ENCODE measurements at regions of chr1 and their contacts with region 1.

Region 1: GRCh38 chr1:84781946-84782771 is 91.9 kb upstream of the SSX2IP start:
- DNase-seq: peak; percentile 88
- H3K4me3 Mint-ChIP-seq: peak overlapping the region; percentile 67
- H3K27ac Mint-ChIP-seq: no peak overlapping the region
- H3K4me1 Mint-ChIP-seq: peaks cover 17% of the 10 kb centered on the region
- H3K27me3 Mint-ChIP-seq: no peaks in the 10 kb centered on the region

Region 2: GRCh38 chr1:84795966-84796600 is 13.9 kb after region 1 on chr1:
- CTCF ChIA-PET with region 1: interaction called, 17 read pairs
- POLR2A ChIA-PET with region 1: no interaction called
- intact Hi-C with region 1: no loop called
- DNase-seq: no peak
- H3K4me3 Mint-ChIP-seq: no peak overlapping the region
- H3K27ac Mint-ChIP-seq: no peak overlapping the region
- H3K4me1 Mint-ChIP-seq: no peaks in the 10 kb centered on the region
- H3K27me3 Mint-ChIP-seq: no peaks in the 10 kb centered on the region

Region 3: DNA sequence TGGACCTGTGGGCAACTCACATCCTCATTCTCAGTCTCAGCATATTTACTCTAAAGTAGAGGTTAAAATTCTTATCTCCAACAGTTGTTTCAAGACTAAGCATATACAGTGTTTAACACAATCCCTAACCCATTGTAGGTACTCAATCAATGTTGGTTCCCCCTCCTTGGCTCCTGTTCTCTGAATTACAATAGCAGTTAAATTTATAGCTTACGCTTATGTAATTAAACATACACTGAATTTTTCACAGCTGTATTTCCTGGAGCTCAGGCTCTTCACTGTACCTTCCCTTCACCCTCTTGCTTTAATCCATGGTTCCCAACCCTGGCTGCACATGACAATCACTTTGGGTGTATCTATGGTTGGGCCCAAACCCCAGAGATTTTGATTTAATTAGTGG is 21.4 kb after region 1 on chr1:
- CTCF ChIA-PET with region 1: interaction called, 14 read pairs
- POLR2A ChIA-PET with region 1: no interaction called
- intact Hi-C with region 1: no loop called
- DNase-seq: no peak
- H3K4me3 Mint-ChIP-seq: no peak overlapping the region
- H3K27ac Mint-ChIP-seq: no peak overlapping the region
- H3K4me1 Mint-ChIP-seq: no peaks in the 10 kb centered on the region
- H3K27me3 Mint-ChIP-seq: peaks cover 1% of the 10 kb centered on the region

Region 4: GRCh38 chr1:84862810-84863251 is 80.7 kb after region 1 on chr1:
- CTCF ChIA-PET with region 1: no interaction called
- POLR2A ChIA-PET with region 1: no interaction called
- intact Hi-C with region 1: loop called (anchors 5 kb)
- DNase-seq: peak; percentile 65
- H3K4me3 Mint-ChIP-seq: peak overlapping the region; percentile 7
- H3K27ac Mint-ChIP-seq: peak overlapping the region; percentile 43
- H3K4me1 Mint-ChIP-seq: peaks cover 28% of the 10 kb centered on the region
- H3K27me3 Mint-ChIP-seq: no peaks in the 10 kb centered on the region

Region 5: DNA sequence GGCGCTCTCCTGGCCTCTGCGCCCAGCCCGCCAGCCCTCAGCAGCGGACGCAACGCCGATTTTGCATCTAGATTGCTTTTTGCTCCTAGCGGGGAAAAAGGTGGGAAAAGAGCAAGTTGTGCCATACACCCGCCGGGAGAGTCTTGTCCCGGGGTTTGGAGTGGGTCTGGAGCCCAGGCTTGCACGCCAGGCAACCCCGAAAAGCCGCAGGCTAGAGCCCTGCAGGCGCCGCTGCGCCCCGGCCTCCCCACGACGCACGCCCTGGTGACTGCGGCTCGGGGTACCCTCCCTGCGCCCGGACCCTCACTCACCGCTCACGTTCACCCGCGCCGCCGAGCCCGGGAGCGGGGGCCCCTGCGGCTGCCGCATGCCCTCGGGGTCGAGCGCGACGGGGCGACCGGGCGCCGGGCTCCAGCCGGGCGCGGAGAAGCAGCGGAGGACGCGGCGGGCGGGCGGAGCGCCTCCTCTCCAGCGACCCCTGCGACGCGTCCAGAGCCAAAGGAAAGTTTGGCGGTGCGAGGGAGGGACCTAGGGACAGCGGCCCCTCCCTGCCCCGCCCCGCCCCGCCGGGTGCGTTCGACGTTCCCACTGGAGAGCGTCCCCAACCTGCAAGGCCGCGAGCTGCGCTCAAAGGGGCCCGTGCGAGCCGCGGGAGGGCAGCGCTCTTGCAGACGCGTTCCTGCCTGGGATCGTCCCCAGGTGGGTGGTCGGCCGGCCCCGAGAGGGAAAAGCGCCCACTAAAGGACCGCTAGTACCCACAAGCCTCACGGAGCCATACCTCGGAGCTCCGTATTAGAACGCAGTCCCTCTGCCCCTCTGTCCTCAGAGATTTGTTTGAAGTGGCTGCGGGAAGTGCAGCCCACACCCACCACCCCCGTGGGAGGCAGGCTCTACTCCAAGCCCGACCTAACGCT is 110.8 kb after region 1 on chr1 and contains the start of gene LPAR3:
- CTCF ChIA-PET with region 1: interaction called, 4 read pairs
- POLR2A ChIA-PET with region 1: no interaction called
- intact Hi-C with region 1: loop called (anchors 2 kb)
- DNase-seq: peak; percentile 50
- H3K4me3 Mint-ChIP-seq: peak within 1 kb of the TSS; percentile 65
- H3K27ac Mint-ChIP-seq: no peak within 1 kb of the TSS
- H3K4me1 Mint-ChIP-seq: peaks cover 18% of the 10 kb centered on the region
- H3K27me3 Mint-ChIP-seq: peaks cover 27% of the 10 kb centered on the region
- total RNA-seq, gene LPAR3: 0.36 to 0.83 TPM

Region 6: GRCh38 chr1:84928979-84929378 is 146.8 kb after region 1 on chr1:
- CTCF ChIA-PET with region 1: interaction called, 10 read pairs
- POLR2A ChIA-PET with region 1: no interaction called
- intact Hi-C with region 1: no loop called
- DNase-seq: no peak
- H3K4me3 Mint-ChIP-seq: no peak overlapping the region
- H3K27ac Mint-ChIP-seq: no peak overlapping the region
- H3K4me1 Mint-ChIP-seq: peaks cover 9% of the 10 kb centered on the region
- H3K27me3 Mint-ChIP-seq: no peaks in the 10 kb centered on the region

Region 7: GRCh38 chr1:84936116-84936810 is 154.1 kb after region 1 on chr1:
- CTCF ChIA-PET with region 1: interaction called, 47 read pairs
- POLR2A ChIA-PET with region 1: no interaction called
- intact Hi-C with region 1: loop called (anchors 1 kb)
- DNase-seq: peak; percentile 27
- H3K4me3 Mint-ChIP-seq: no peak overlapping the region
- H3K27ac Mint-ChIP-seq: no peak overlapping the region
- H3K4me1 Mint-ChIP-seq: peaks cover 4% of the 10 kb centered on the region
- H3K27me3 Mint-ChIP-seq: no peaks in the 10 kb centered on the region

Measured in activated CD4-positive, alpha-beta memory T cell treated with anti-CD3 and anti-CD28 coated beads for 36 hours (primary cell).